AG04450 (cell line): ENCODE measurements at regions of chr5 and their contacts with region 1.

Region 1: GRCh38 chr5:118956727-118957126 is 31.6 kb downstream of the DTWD2 start:
- DNase-seq: no peak
- H3K4me3 ChIP-seq: no peak overlapping the region
- H3K27ac ChIP-seq: no peak overlapping the region
- H3K27me3 ChIP-seq: no peaks in the 10 kb centered on the region
- CTCF ChIP-seq: peak; percentile 45

Region 2: DNA sequence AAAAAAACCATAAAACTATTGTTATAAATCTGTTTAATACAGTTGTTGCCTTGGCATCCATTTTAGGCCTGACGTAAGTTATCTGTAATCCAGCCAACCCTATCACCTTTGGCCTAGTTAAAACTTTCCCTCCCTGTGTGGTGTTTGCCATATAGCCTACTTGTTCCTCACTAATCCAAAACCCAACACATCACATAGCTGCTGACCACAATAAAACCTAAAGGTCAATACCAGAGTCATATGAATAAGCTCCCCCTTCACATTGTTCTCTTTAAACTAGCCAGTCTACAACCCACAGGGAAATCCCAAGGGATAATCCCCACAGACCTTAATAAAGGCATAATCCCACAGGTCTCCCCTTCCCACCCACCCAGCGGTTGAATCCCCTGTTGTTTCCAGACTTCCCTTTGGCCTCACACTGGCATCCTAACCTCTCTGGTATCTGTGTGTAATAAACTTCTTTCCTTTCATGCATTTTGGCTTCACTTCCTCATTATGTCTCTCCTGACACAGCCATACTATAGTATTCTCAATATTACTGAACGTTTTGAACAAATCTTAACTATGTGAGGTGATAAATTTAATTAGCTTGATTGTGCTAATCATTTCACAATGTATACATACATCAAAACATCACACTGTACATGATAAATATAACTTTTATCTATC is 19.2 kb before region 1 on chr5:
- CTCF ChIA-PET with region 1: interaction called, 17 read pairs
- POLR2A ChIA-PET with region 1: no interaction called
- DNase-seq: no peak
- H3K4me3 ChIP-seq: no peak overlapping the region
- H3K27ac ChIP-seq: no peak overlapping the region
- H3K27me3 ChIP-seq: no peaks in the 10 kb centered on the region
- CTCF ChIP-seq: no peak

Region 3: GRCh38 chr5:119022017-119022745 is 65.5 kb after region 1 on chr5:
- CTCF ChIA-PET with region 1: no interaction called
- POLR2A ChIA-PET with region 1: no interaction called
- DNase-seq: peak; percentile 15
- H3K4me3 ChIP-seq: no peak overlapping the region
- H3K27ac ChIP-seq: no peak overlapping the region
- H3K27me3 ChIP-seq: no peaks in the 10 kb centered on the region
- CTCF ChIP-seq: peak; percentile 64